ENCODE measurements at regions of chr2 and their contacts with region 1.

Region 1: GRCh38 chr2:162221064-162221463 is 22.2 kb downstream of the FAP start:
- DNase-seq: no peak
- H3K4me3 ChIP-seq: no peak overlapping the region
- CTCF ChIP-seq: peak; percentile 88

Region 2: DNA sequence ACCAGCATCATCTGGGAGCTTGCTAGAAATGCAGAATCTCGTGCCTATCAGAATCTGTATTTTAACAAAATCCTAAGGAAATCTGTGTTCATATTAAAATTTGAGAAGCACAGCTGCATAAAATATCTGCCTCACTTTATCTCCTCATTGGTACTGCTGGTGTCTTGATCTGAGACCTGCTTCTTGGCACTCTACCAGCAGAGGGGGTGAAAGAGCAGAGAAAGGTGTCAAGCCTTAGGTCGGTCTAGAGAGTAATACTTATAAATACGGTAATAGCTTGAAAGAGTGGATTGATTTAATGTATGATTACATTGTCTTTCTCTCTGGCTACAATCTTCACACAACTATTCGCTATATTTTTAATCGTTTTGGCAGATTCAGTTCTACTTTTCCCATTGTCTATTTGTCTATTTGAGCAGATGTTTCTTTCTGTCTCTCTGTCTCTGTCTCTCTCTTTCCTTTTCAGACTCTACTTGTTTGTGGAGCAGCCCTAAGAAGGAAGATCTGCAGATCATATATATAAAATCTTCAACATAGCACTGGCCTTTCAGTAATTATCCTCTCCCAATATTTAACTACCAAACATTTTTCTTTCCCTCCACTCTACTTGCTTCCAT is 67.3 kb before region 1 on chr2:
- CTCF ChIA-PET with region 1: interaction called, 25 read pairs
- POLR2A ChIA-PET with region 1: no interaction called
- DNase-seq: no peak
- H3K4me3 ChIP-seq: no peak overlapping the region
- CTCF ChIP-seq: peak; percentile 70

Region 3: DNA sequence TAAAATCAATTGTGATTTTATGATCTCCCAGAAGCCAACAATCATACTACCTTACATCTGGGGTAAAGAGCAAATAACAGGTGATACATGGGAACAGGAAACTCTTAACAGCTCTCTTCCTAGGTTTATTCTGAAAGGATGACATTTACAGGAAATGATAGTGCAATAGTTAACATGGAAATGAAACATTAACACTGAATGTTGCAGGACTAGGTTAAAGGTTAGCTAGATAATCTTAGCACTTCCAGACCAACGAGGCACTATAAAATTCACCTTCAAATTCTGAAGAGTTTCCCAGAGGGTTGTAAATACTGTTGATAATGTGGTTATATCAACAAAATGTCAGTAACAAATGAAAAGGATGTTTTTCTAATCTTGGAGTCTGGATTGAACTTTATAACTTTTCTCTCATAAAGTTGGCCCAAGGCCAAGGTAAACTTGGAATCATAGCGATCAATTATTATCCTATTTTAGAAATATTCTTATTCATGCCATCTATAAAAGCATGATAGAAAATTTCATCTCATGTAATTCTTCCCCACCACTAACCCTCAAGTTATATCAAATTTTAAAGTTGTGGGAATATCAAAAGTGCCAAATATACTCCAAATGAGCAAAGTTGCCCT is 36.1 kb before region 1 on chr2:
- CTCF ChIA-PET with region 1: interaction called, 14 read pairs
- POLR2A ChIA-PET with region 1: no interaction called
- DNase-seq: no peak
- H3K4me3 ChIP-seq: no peak overlapping the region
- CTCF ChIP-seq: no peak

Region 4: DNA sequence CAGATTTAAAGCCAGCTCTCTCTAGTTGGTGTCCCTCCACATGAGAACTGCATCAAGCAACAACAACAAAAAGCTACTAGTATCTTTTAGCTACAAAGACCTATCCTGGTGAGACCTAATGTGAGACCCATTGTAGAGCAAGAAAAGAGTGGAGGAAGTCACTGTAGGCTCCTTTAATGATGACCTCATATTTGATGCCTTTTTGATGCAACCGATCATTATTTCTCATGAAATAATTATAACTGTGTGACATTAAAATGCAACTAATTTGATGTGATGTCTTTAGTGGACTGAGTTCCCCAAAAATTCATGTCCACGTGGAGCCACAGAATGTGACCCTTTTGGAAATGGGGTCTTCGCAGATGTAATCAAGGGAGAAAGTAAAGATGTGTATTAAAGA is 17.0 kb before region 1 on chr2:
- CTCF ChIA-PET with region 1: interaction called, 55 read pairs
- POLR2A ChIA-PET with region 1: no interaction called
- DNase-seq: no peak
- H3K4me3 ChIP-seq: no peak overlapping the region
- CTCF ChIP-seq: no peak

Region 5: DNA sequence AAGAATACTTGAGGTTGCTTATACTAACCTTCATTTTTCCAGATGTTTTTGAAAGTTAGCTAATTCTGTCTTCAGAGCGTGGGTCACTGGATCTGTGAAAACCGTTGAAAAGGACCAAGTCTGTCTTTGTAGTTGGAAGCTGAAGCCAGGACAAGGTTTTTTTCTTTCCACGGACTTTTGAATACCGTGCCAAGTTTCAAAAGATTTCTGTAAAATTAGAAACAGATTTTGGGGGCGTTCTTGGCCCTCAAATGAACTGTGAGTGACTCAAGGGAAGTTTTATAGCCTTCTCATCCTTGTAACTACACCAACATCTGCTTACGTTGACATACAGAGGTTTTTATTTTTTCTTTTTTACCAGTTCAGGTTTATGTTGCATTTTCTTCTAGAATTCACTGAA is 22.2 kb after region 1 on chr2 and contains the start of gene FAP:
- CTCF ChIA-PET with region 1: interaction called, 65 read pairs
- POLR2A ChIA-PET with region 1: no interaction called
- DNase-seq: peak; percentile 87
- H3K4me3 ChIP-seq: peak within 1 kb of the TSS; percentile 64
- CTCF ChIP-seq: no peak

Region 6: DNA sequence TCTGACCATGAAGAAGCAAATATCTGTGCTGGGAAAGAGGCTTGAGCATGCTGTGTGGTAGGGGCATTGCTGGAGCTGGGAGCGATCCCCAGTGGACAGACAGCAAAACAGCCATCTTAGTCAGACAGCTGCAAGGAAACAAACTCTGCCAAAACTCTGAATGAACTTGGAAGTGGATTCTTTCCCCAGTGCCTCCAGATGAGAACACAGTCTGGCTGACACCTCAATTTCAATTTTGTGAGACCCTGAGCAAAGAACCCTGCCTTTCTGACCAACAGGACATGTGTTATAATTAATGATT is 45.3 kb after region 1 on chr2:
- CTCF ChIA-PET with region 1: interaction called, 20 read pairs
- POLR2A ChIA-PET with region 1: no interaction called
- DNase-seq: no peak
- H3K4me3 ChIP-seq: no peak overlapping the region
- CTCF ChIP-seq: no peak

Region 7: DNA sequence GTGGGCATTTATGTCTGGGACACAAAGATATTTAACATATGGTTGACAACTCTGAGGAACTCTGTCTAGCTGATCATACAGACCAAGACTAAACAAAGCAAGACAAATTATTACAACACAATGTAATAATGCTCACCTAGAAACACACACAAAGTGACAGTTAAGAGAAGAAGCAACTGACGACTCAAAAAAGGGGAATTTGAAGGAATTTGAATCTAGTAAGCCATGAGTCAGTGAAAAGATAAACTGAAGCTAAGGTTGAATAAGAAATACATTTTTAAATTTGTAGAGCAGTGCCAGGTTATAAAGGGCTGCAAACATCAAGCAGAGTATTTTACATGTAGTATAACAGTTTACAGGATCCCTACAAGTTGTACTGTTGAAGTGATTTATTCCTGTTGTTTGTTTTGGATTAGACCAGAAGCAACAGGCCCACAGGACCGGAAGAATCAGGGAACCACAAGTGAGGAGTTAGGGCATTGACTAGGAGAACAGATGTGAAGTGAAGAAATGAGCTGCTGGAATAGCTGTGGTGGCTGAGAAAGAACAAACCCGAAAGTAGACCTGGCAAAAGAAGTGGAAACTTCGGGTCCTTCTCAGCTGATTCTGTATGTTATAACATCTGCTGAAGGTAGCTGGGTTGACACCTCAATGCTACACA is 61.8 kb after region 1 on chr2:
- CTCF ChIA-PET with region 1: interaction called, 29 read pairs
- POLR2A ChIA-PET with region 1: no interaction called
- DNase-seq: no peak
- H3K4me3 ChIP-seq: no peak overlapping the region
- CTCF ChIP-seq: no peak

Measured in AG04449 (cell line).